Activated CD4-positive, alpha-beta memory T cell treated with anti-CD3 and anti-CD28 coated beads for 36 hours (primary cell): ENCODE measurements at regions of chr9 and their contacts with region 1.

Region 1: GRCh38 chr9:87812375-87813118 is 70.1 kb upstream of the SPATA31E1 start:
- DNase-seq: peak; percentile 77
- H3K4me3 Mint-ChIP-seq: no peak overlapping the region
- H3K27ac Mint-ChIP-seq: peak overlapping the region; percentile 40
- H3K4me1 Mint-ChIP-seq: peaks cover 24% of the 10 kb centered on the region
- H3K27me3 Mint-ChIP-seq: peaks cover 26% of the 10 kb centered on the region

Region 2: GRCh38 chr9:86405926-86406325 is 1406.6 kb before region 1 on chr9:
- CTCF ChIA-PET with region 1: interaction called, 7 read pairs
- POLR2A ChIA-PET with region 1: no interaction called
- intact Hi-C with region 1: loop called (anchors 5 kb)
- DNase-seq: peak; percentile 57
- H3K4me3 Mint-ChIP-seq: peak overlapping the region; percentile 17
- H3K27ac Mint-ChIP-seq: peak overlapping the region; percentile 40
- H3K4me1 Mint-ChIP-seq: peaks cover 20% of the 10 kb centered on the region
- H3K27me3 Mint-ChIP-seq: peaks cover 21% of the 10 kb centered on the region

Region 3: DNA sequence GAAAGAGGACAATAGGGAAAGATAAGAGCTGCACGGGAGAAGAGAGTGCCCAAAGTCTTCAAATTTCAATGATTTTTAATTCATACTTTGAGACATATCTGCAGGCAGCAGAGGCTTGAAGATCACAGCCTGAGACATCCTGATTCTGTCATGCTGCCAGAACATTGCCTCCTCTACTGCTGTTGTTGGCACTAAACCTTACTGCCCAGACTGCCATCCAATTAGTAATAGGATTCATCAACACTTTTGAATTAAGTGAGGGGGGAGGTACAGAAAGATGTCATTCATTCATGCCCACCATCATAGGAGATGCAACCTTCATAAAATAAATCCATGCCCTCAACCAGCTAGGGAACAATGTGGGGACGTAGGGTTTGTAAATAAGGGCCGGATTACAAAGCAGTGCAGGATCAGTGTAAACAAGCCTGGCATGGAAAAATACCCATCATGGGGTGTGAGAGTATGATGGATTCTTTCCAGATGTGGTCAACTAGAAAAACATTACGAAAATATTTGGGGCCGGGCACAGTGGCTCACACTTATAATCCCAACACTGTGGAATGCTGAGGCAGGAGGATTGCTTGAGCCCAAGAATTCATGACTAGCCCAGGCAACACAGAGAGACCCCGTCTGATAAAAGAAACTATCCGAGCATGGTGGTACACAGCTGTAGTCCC is 437.0 kb before region 1 on chr9:
- CTCF ChIA-PET with region 1: interaction called, 3 read pairs
- POLR2A ChIA-PET with region 1: no interaction called
- intact Hi-C with region 1: loop called (anchors 1 kb)
- DNase-seq: no peak
- H3K4me3 Mint-ChIP-seq: no peak overlapping the region
- H3K27ac Mint-ChIP-seq: no peak overlapping the region
- H3K4me1 Mint-ChIP-seq: peaks cover 10% of the 10 kb centered on the region
- H3K27me3 Mint-ChIP-seq: peaks cover 27% of the 10 kb centered on the region

Region 4: GRCh38 chr9:87678650-87679515 is 133.7 kb before region 1 on chr9:
- CTCF ChIA-PET with region 1: interaction called, 15 read pairs
- POLR2A ChIA-PET with region 1: no interaction called
- intact Hi-C with region 1: loop called (anchors 2 kb)
- DNase-seq: peak; percentile 45
- H3K4me3 Mint-ChIP-seq: no peak overlapping the region
- H3K27ac Mint-ChIP-seq: no peak overlapping the region
- H3K4me1 Mint-ChIP-seq: no peaks in the 10 kb centered on the region
- H3K27me3 Mint-ChIP-seq: peaks cover 2% of the 10 kb centered on the region

Region 5: DNA sequence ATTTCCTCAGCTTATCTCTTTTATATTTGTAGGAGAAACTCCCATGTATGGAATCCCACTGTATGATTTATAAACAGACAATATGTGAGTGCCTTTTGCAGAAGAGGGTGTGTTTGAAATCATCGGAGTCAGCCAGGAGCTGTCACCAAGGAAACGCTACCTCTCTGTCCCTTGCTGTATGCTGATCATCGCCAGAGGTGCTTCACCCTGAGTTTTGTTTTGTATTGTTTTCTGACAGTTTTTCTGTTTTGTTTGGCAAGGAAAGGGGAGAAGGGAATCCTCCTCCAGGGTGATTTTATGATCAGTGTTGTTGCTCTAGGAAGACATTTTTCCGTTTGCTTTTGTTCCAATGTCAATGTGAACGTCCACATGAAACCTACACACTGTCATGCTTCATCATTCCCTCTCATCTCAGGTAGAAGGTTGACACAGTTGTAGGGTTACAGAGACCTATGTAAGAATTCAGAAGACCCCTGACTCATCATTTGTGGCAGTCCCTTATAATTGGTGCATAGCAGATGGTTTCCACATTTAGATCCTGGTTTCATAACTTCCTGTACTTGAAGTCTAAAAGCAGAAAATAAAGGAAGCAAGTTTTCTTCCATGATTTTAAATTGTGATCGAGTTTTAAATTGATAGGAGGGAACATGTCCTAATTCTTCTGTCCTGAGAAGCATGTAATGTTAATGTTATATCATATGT is 104.6 kb before region 1 on chr9:
- CTCF ChIA-PET with region 1: interaction called, 10 read pairs
- POLR2A ChIA-PET with region 1: no interaction called
- intact Hi-C with region 1: loop called (anchors 1 kb)
- DNase-seq: no peak
- H3K4me3 Mint-ChIP-seq: no peak overlapping the region
- H3K27ac Mint-ChIP-seq: no peak overlapping the region
- H3K4me1 Mint-ChIP-seq: peaks cover 34% of the 10 kb centered on the region
- H3K27me3 Mint-ChIP-seq: peaks cover 2% of the 10 kb centered on the region

Region 6: GRCh38 chr9:87766703-87767102 is 45.8 kb before region 1 on chr9:
- CTCF ChIA-PET with region 1: interaction called, 3 read pairs
- POLR2A ChIA-PET with region 1: no interaction called
- intact Hi-C with region 1: loop called (anchors 1 kb)
- DNase-seq: peak; percentile 49
- H3K4me3 Mint-ChIP-seq: no peak overlapping the region
- H3K27ac Mint-ChIP-seq: no peak overlapping the region
- H3K4me1 Mint-ChIP-seq: peaks cover 6% of the 10 kb centered on the region
- H3K27me3 Mint-ChIP-seq: peaks cover 13% of the 10 kb centered on the region

Region 7: DNA sequence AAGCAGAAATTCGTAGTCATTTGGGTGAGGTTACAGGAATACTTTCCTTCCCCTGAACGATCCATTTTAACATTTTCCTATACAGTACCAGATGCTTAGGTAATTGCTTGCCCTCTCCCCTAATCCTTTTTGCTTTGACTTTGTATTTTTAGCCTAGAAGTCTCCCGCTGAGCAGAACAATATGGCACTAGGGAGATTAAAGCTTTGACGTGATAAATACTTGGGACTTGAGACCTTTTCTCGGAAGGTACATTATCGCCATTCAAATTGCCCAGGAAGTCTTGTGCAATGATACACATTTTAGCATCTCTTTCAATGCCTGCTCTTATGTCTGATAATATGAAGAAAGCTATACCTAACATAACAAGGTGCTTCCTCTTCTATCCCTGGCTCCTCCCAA is 348.6 kb after region 1 on chr9:
- CTCF ChIA-PET with region 1: no interaction called
- POLR2A ChIA-PET with region 1: no interaction called
- intact Hi-C with region 1: no loop called
- DNase-seq: no peak
- H3K4me3 Mint-ChIP-seq: no peak overlapping the region
- H3K27ac Mint-ChIP-seq: no peak overlapping the region
- H3K4me1 Mint-ChIP-seq: no peaks in the 10 kb centered on the region
- H3K27me3 Mint-ChIP-seq: peaks cover 26% of the 10 kb centered on the region